ENCODE measurements at regions of chr2 and their contacts with region 1.

Region 1: GRCh38 chr2:59301466-59302402 is 1060.6 kb upstream of the FANCL start:
- DNase-seq: peak; percentile 86
- H3K4me3 ChIP-seq: no peak overlapping the region
- H3K27ac ChIP-seq: no peak overlapping the region
- H3K4me1 ChIP-seq: no peaks in the 10 kb centered on the region
- H3K27me3 ChIP-seq: no peaks in the 10 kb centered on the region
- CTCF ChIP-seq: peak; percentile 66

Region 2: GRCh38 chr2:59232394-59233165 is 69.2 kb before region 1 on chr2:
- CTCF ChIA-PET with region 1: no interaction called
- POLR2A ChIA-PET with region 1: no interaction called
- intact Hi-C with region 1: no loop called
- DNase-seq: no peak
- H3K4me3 ChIP-seq: no peak overlapping the region
- H3K27ac ChIP-seq: no peak overlapping the region
- H3K4me1 ChIP-seq: no peaks in the 10 kb centered on the region
- H3K27me3 ChIP-seq: no peaks in the 10 kb centered on the region
- CTCF ChIP-seq: no peak

Region 3: DNA sequence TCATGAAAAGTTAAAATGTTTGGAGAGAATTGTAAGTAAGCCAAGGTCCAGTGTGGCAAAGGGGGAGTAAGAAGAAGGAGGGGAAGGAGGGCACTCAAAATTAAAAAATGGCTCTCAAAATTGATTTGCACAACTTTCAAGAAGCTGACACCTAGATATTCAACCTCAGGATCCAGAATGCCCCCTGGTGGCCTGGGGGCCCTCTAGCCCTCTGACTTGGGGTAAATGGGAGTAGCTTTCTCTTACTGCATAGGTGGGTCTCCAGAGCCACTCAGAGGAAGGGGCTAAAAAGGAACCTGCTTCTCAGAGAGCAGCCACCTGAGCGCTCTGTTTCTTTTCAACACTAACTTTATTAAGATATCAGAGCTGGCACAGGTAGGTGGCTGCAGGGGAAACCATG is 283.2 kb after region 1 on chr2:
- CTCF ChIA-PET with region 1: no interaction called
- POLR2A ChIA-PET with region 1: no interaction called
- intact Hi-C with region 1: loop called (anchors 10 kb)
- DNase-seq: peak; percentile 18
- H3K4me3 ChIP-seq: no peak overlapping the region
- H3K27ac ChIP-seq: no peak overlapping the region
- H3K4me1 ChIP-seq: no peaks in the 10 kb centered on the region
- H3K27me3 ChIP-seq: peaks cover 10% of the 10 kb centered on the region
- CTCF ChIP-seq: peak; percentile 39